ENCODE measurements at regions of chr5 and their contacts with region 1.

Region 1: GRCh38 chr5:133111299-133111698 is 59.5 kb downstream of the HSPA4 start:
- DNase-seq: peak; percentile 88
- ATAC-seq: peak; percentile 60
- H3K4me3 ChIP-seq: no peak overlapping the region
- H3K4me3 Mint-ChIP-seq: no peak overlapping the region
- H3K27ac ChIP-seq: no peak overlapping the region
- H3K27ac Mint-ChIP-seq: peak overlapping the region; percentile 0
- H3K4me1 ChIP-seq: peaks cover 37 to 39% of the 10 kb centered on the region in 2 donors
- H3K4me1 Mint-ChIP-seq: peaks cover 59% of the 10 kb centered on the region
- H3K27me3 ChIP-seq: no peaks in the 10 kb centered on the region
- H3K27me3 Mint-ChIP-seq: no peaks in the 10 kb centered on the region
- CTCF ChIP-seq: peak; percentile 97

Region 2: GRCh38 chr5:133032852-133033742 is 78.2 kb before region 1 on chr5:
- CTCF ChIA-PET with region 1: no interaction called
- POLR2A ChIA-PET with region 1: interaction called, 15 read pairs
- intact Hi-C with region 1: no loop called
- DNase-seq: peak; percentile 79
- ATAC-seq: peak; percentile 92
- H3K4me3 ChIP-seq: peak overlapping the region in 3 of 5 experiments; percentile 1 to 36 (median 2)
- H3K4me3 Mint-ChIP-seq: peak overlapping the region; percentile 81
- H3K27ac ChIP-seq: peak overlapping the region; percentile 90 to 94
- H3K27ac Mint-ChIP-seq: peak overlapping the region; percentile 97
- H3K4me1 ChIP-seq: peaks cover 57 to 69% of the 10 kb centered on the region in 2 donors
- H3K4me1 Mint-ChIP-seq: peaks cover 52% of the 10 kb centered on the region
- H3K27me3 ChIP-seq: no peaks in the 10 kb centered on the region
- H3K27me3 Mint-ChIP-seq: no peaks in the 10 kb centered on the region
- CTCF ChIP-seq: no peak

Region 3: GRCh38 chr5:133145436-133146170 is 34.3 kb after region 1 on chr5:
- CTCF ChIA-PET with region 1: no interaction called
- POLR2A ChIA-PET with region 1: no interaction called
- intact Hi-C with region 1: no loop called
- DNase-seq: no peak
- ATAC-seq: no peak
- H3K4me3 ChIP-seq: no peak overlapping the region
- H3K4me3 Mint-ChIP-seq: no peak overlapping the region
- H3K27ac ChIP-seq: no peak overlapping the region
- H3K27ac Mint-ChIP-seq: no peak overlapping the region
- H3K4me1 ChIP-seq: no peaks in the 10 kb centered on the region
- H3K4me1 Mint-ChIP-seq: no peaks in the 10 kb centered on the region
- H3K27me3 ChIP-seq: peaks cover 0 to 6% (median 0%) of the 10 kb centered on the region in 4 experiments
- H3K27me3 Mint-ChIP-seq: peaks cover 22% of the 10 kb centered on the region
- CTCF ChIP-seq: no peak

Region 4: GRCh38 chr5:133267601-133268000 is 156.3 kb after region 1 on chr5:
- CTCF ChIA-PET with region 1: no interaction called
- POLR2A ChIA-PET with region 1: no interaction called
- intact Hi-C with region 1: no loop called
- DNase-seq: no peak
- ATAC-seq: no peak
- H3K4me3 ChIP-seq: no peak overlapping the region
- H3K4me3 Mint-ChIP-seq: no peak overlapping the region
- H3K27ac ChIP-seq: no peak overlapping the region
- H3K27ac Mint-ChIP-seq: no peak overlapping the region
- H3K4me1 ChIP-seq: no peaks in the 10 kb centered on the region
- H3K4me1 Mint-ChIP-seq: no peaks in the 10 kb centered on the region
- H3K27me3 ChIP-seq: peaks cover 0 to 5% (median 0%) of the 10 kb centered on the region in 4 experiments
- H3K27me3 Mint-ChIP-seq: peaks cover 20% of the 10 kb centered on the region
- CTCF ChIP-seq: no peak

Region 5: GRCh38 chr5:133423618-133424282 is 312.5 kb after region 1 on chr5:
- CTCF ChIA-PET with region 1: interaction called, 6 read pairs
- POLR2A ChIA-PET with region 1: no interaction called
- intact Hi-C with region 1: loop called (anchors 5 kb)
- DNase-seq: peak; percentile 80
- ATAC-seq: peak; percentile 79
- H3K4me3 ChIP-seq: no peak overlapping the region
- H3K4me3 Mint-ChIP-seq: no peak overlapping the region
- H3K27ac ChIP-seq: no peak overlapping the region
- H3K27ac Mint-ChIP-seq: no peak overlapping the region
- H3K4me1 ChIP-seq: peaks cover 0 to 13% of the 10 kb centered on the region in 2 donors
- H3K4me1 Mint-ChIP-seq: peaks cover 7% of the 10 kb centered on the region
- H3K27me3 ChIP-seq: no peaks in the 10 kb centered on the region
- H3K27me3 Mint-ChIP-seq: peaks cover 28% of the 10 kb centered on the region
- CTCF ChIP-seq: peak; percentile 98

Region 6: GRCh38 chr5:133610489-133611356 is 499.4 kb after region 1 on chr5:
- CTCF ChIA-PET with region 1: no interaction called
- POLR2A ChIA-PET with region 1: no interaction called
- intact Hi-C with region 1: loop called (anchors 10 kb)
- DNase-seq: peak; percentile 70
- ATAC-seq: peak; percentile 63
- H3K4me3 ChIP-seq: peak overlapping the region; percentile 32 to 60 (median 52)
- H3K4me3 Mint-ChIP-seq: peak overlapping the region; percentile 79
- H3K27ac ChIP-seq: no peak overlapping the region
- H3K27ac Mint-ChIP-seq: no peak overlapping the region
- H3K4me1 ChIP-seq: peaks cover 17 to 23% of the 10 kb centered on the region in 2 donors
- H3K4me1 Mint-ChIP-seq: peaks cover 15% of the 10 kb centered on the region
- H3K27me3 ChIP-seq: peaks cover 2 to 50% (median 45%) of the 10 kb centered on the region in 4 experiments
- H3K27me3 Mint-ChIP-seq: peaks cover 56% of the 10 kb centered on the region
- CTCF ChIP-seq: peak; percentile 25

Region 7: GRCh38 chr5:134145779-134146581 is 1034.7 kb after region 1 on chr5:
- CTCF ChIA-PET with region 1: interaction called, 7 read pairs
- POLR2A ChIA-PET with region 1: no interaction called
- intact Hi-C with region 1: loop called (anchors 10 kb)
- DNase-seq: peak; percentile 85
- ATAC-seq: peak; percentile 89
- H3K4me3 ChIP-seq: no peak overlapping the region
- H3K4me3 Mint-ChIP-seq: no peak overlapping the region
- H3K27ac ChIP-seq: no peak overlapping the region
- H3K27ac Mint-ChIP-seq: peak overlapping the region; percentile 11
- H3K4me1 ChIP-seq: no peaks in the 10 kb centered on the region
- H3K4me1 Mint-ChIP-seq: peaks cover 7% of the 10 kb centered on the region
- H3K27me3 ChIP-seq: no peaks in the 10 kb centered on the region
- H3K27me3 Mint-ChIP-seq: no peaks in the 10 kb centered on the region
- CTCF ChIP-seq: peak; percentile 96